ENCODE measurements at regions of chr15 and their contacts with region 1.

Region 1: DNA sequence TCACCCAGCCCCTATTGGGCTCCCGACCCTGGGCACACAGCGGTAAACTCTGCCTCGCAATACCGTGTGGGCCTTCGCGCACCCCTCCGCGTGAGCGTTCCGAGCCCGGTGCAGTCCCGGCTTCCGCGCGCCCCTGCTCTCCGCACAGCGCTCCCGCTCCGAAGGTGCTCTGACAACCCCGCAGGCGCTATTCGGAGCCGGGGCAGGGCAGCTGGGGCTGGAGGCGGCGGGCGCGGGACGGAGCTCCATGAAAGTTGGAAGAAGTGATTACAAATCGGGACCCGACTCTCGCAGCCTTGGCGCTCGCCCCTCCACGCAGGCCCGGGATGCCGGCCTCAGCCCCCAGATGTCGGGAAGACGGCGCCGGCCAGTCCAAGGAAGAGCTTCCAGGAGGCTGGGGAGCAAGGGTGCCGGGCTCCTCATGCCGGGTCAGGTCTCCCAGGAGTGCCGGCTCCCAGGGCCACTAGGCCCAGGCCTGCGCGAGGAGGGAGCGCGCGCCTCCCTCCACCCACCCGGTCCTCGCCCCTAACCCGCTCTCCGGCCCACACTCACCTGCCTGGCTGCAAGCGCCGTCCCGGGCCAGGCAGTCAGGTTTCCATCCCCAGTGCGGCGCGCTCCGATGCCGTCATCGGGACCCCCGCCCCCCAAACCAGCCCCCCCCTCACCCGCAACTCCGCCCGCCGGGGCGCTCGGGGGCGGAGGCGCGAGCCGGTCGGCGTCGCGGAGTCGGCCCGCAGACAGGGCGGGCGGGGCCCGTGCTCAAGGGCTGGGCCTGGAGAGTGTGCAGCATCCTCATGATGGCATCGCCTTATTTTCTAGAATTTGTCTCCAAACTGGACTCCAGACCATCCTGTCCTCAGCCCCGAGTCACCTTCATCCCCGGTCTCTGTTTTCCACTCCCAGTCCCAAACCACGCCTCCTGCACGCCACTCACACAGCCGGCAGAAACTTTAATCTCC is at the start of gene KIF7:
- DNase-seq: no peak
- ATAC-seq: peak; percentile 71 to 84 (median 76)
- H3K4me3 ChIP-seq: peak within 1 kb of the TSS; percentile 31 to 74 (median 59)
- H3K27ac ChIP-seq: peak within 1 kb of the TSS in 5 of 10 donors; percentile 3 to 64 (median 22)
- H3K4me1 ChIP-seq: peaks cover 0 to 20% (median 7%) of the 10 kb centered on the region in 9 donors
- H3K27me3 ChIP-seq: peaks cover 0 to 47% (median 4%) of the 10 kb centered on the region in 7 donors
- CTCF ChIP-seq: no peak
- total RNA-seq, gene KIF7: 1.6 to 4.7 (median 3.1) TPM

Region 2: DNA sequence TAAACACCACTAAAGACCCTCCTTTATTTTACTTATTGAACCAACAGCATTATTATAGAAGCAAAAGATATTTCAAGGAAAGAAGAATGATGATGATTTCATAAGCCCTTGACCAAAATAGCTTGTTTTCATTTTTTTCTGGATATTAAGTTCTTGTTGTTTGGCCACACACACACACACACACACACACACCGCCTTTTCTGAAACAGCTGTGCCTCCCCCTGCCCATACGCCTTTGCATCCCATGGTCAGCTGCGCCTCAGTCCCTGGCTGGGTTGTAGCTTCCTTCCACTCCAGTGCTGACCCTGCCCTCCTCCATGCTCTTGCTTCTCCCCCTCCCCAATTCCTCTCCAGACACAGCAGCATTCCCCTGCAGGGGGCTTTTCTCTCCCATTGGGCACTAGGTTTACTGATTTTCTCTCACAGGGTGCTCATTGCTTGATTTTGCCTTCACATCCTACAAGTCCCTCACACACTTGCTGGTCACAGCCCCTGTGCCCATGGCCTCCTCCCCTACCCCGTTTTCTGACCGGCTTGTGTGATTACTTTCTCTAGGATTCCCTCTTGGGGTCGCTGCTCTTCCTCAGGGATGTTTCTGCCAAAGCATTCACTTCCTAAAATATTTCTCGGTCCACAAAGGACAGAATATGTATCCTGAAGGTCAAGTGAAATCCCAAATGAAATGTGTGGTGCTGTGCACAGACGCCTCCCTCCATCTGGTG is 77.5 kb after region 1 on chr15:
- intact Hi-C with region 1: loop called in 1 of 10 experiments (anchors 10 kb)
- DNase-seq: no peak
- ATAC-seq: peak in 2 of 8 donors; percentile 29 to 57
- H3K4me3 ChIP-seq: no peak overlapping the region
- H3K27ac ChIP-seq: no peak overlapping the region
- H3K4me1 ChIP-seq: peaks cover 0 to 6% (median 0%) of the 10 kb centered on the region in 9 donors
- H3K27me3 ChIP-seq: peaks cover 0 to 17% (median 8%) of the 10 kb centered on the region in 7 donors
- CTCF ChIP-seq: no peak

Measured in heart right ventricle (tissue), 16 donors.